ENCODE measurements at regions of chr11 and their contacts with region 1.

Region 1: GRCh38 chr11:46845740-46846509 is at the start of gene CKAP5:
- H3K4me3 Mint-ChIP-seq: peak within 1 kb of the TSS; percentile 96
- H3K27ac Mint-ChIP-seq: peak within 1 kb of the TSS; percentile 91
- H3K4me1 Mint-ChIP-seq: peaks cover 33% of the 10 kb centered on the region
- H3K27me3 Mint-ChIP-seq: no peaks in the 10 kb centered on the region

Region 2: DNA sequence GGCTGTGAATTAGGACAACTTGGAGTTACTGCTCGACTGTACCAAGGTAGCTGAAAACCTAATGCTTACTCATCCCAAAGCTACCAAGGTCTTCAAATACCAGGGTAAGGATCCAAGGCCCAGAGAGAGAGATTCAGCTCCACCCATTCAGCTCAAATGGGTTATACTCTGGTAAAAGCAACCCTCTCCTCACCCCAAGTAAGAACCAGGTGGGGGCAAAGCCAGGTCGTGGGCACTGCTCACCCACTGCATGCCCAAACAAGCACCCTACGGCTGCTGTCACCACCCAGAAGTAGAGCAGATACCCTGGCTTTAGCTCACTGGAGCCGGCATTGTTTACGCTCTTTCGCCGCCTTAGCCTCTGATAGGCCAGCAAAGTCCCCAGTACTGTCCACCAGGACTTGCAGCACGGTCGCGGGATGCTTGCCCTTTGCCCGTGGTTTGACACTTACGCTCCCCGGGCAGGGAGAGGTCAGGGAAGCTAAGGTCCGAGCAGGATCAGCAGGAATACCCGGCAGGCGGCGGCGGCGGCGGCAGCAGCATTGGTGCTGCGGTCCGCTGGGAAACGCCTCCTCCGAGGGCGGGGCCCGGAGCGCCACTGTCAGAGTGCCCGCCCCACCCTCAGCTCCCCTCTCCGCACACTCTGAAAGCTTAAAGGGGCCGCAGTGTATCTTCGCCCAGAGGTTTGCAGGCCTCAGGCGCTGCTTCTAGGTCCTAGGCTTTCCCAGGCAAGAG is 19.4 kb before region 1 on chr11:
- intact Hi-C with region 1: loop called (anchors 1 kb)
- H3K4me3 Mint-ChIP-seq: peak overlapping the region; percentile 86
- H3K27ac Mint-ChIP-seq: peak overlapping the region; percentile 66
- H3K4me1 Mint-ChIP-seq: peaks cover 25% of the 10 kb centered on the region
- H3K27me3 Mint-ChIP-seq: no peaks in the 10 kb centered on the region

Region 3: DNA sequence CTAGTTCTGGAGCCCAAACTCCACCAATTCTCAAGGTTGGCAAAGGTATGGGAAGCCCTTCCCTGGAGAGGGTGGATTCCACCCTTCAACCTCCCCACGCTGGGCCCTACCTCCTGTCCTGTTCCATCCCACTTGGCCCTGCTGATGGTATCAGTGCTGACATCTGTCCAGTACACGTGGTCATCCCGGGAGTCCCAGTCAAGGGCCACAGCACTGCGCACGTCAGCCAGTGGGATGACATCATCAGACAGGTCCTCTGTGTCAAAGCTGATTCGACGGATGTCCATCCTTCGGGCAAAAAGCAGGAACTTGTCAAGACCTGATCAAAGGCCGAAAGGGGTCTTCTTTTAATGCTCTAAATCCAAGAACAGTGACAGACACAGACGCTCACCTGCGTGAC is 40.3 kb after region 1 on chr11:
- intact Hi-C with region 1: no loop called
- H3K4me3 Mint-ChIP-seq: no peak overlapping the region
- H3K27ac Mint-ChIP-seq: no peak overlapping the region
- H3K4me1 Mint-ChIP-seq: no peaks in the 10 kb centered on the region
- H3K27me3 Mint-ChIP-seq: peaks cover 3% of the 10 kb centered on the region

Region 4: GRCh38 chr11:46987183-46987582 is 141.3 kb after region 1 on chr11:
- intact Hi-C with region 1: no loop called
- H3K4me3 Mint-ChIP-seq: no peak overlapping the region
- H3K27ac Mint-ChIP-seq: no peak overlapping the region
- H3K4me1 Mint-ChIP-seq: no peaks in the 10 kb centered on the region
- H3K27me3 Mint-ChIP-seq: no peaks in the 10 kb centered on the region

Measured in dendritic cell treated with granulocyte-macrophage colony-stimulating factor and Interleukin-4, amounts not matched to agents 40 ng/mL and 50 ng/mL, for 4 days (primary cell).